Heart right ventricle (tissue), 16 donors: ENCODE measurements at regions of chr12 and their contacts with region 1.

Region 1: DNA sequence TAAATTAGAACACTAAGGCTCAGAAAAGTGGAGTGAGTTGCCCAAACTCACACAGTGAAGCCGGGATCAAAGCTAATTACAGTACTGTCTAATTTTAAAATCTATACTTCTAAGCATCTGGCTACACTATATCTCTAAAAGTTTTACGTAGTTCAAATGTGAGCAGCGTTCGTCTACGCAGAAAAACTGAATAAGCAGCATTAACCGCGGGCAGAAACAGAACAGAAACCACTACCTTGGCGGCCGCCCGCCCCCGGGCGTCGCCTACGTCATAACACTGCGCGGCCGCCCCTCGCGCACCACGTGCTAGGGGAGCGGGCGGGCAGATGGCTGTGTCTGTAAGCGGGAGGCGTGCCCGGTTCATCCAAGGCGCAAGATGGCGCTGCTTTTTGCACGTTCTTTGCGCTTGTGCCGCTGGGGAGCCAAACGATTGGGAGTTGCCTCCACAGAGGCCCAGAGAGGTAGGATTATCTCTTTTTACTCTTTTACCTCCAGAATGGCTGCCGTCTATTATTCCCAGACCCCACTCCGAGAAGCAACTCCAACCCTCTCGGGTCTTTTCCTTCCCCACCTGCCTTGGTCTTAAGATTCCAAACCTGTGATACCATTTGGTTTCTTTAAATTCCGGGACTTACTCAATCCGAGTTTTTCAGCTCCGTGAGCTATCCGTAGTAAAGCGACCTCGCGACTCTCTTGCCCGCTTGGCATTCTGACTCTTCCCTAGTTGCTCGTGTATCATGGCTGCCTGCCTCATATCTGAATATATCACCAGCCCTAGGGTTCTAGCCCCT is at the start of gene SPRYD4:
- DNase-seq: peak; percentile 92 to 93
- ATAC-seq: peak; percentile 96 to 99 (median 98)
- H3K4me3 ChIP-seq: peak within 1 kb of the TSS; percentile 53 to 95 (median 79)
- H3K27ac ChIP-seq: peak within 1 kb of the TSS; percentile 49 to 94 (median 88)
- H3K4me1 ChIP-seq: peaks cover 3 to 35% (median 20%) of the 10 kb centered on the region in 9 donors
- H3K27me3 ChIP-seq: no peaks in the 10 kb centered on the region
- CTCF ChIP-seq: peak in 8 of 9 donors; percentile 13 to 67 (median 44)
- total RNA-seq, gene SPRYD4: 3.0 to 5.0 (median 4.4) TPM

Region 2: GRCh38 chr12:55619354-55620138 is 848.9 kb before region 1 on chr12:
- intact Hi-C with region 1: loop called in 1 of 10 experiments (anchors 10 kb)
- DNase-seq: peak in 1 of 2 donors; percentile 80
- ATAC-seq: peak; percentile 72 to 93 (median 92)
- H3K4me3 ChIP-seq: no peak overlapping the region
- H3K27ac ChIP-seq: no peak overlapping the region
- H3K4me1 ChIP-seq: peaks cover 0 to 10% (median 0%) of the 10 kb centered on the region in 9 donors
- H3K27me3 ChIP-seq: peaks cover 0 to 17% (median 0%) of the 10 kb centered on the region in 7 donors
- CTCF ChIP-seq: peak; percentile 67 to 85 (median 81)

Region 3: GRCh38 chr12:56127888-56128669 is 340.3 kb before region 1 on chr12 and contains the start of gene ESYT1:
- intact Hi-C with region 1: loop called in 3 of 10 experiments (anchors 5 to 10 kb)
- DNase-seq: peak; percentile 95 to 99
- ATAC-seq: peak; percentile 94 to 97 (median 96)
- H3K4me3 ChIP-seq: peak within 1 kb of the TSS; percentile 53 to 94 (median 84)
- H3K27ac ChIP-seq: peak within 1 kb of the TSS; percentile 51 to 94 (median 88)
- H3K4me1 ChIP-seq: peaks cover 8 to 61% (median 44%) of the 10 kb centered on the region in 9 donors
- H3K27me3 ChIP-seq: no peaks in the 10 kb centered on the region
- CTCF ChIP-seq: peak in 1 of 9 donors; percentile 18
- total RNA-seq, gene ESYT1: 28.8 to 47.5 (median 31.9) TPM

Region 4: DNA sequence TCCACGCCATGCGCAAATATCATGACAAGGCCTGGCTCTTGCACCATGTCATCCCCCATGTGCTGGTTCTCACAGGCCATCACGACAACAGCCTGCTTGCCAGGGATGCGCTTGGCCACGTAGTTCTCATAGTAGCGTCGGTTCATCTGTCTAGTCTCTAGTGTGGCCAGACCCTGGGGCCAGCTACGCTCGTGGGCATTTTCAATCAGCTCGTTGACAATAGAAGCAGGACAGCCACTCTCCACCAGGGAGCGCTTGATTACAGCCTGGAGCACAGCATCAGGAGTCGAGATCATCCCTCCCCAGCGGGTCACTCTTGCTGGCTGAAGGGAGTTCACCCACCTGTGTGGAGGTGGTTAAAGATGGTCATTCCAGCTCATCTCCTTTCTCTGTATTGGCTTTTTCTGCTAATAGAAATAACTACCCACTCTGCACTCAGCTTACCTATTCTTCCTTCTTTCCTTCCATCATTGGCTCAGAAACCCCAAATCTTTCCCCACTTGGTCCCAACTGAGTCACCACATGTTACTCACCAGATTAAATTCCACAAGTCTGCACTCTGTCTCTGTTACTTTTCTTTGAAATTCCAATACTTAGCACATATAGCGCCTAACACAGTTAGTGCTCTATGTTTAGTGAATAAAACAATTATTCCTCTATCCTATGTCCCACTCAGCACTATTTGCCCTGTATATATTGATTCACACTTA is 261.8 kb before region 1 on chr12:
- intact Hi-C with region 1: loop called in 2 of 10 experiments (anchors 10 kb)
- DNase-seq: peak; percentile 24 to 55
- ATAC-seq: peak; percentile 36 to 75 (median 64)
- H3K4me3 ChIP-seq: no peak overlapping the region
- H3K27ac ChIP-seq: peak overlapping the region in 2 of 10 donors; percentile 16 to 42
- H3K4me1 ChIP-seq: peaks cover 0 to 22% (median 3%) of the 10 kb centered on the region in 9 donors
- H3K27me3 ChIP-seq: no peaks in the 10 kb centered on the region
- CTCF ChIP-seq: peak in 8 of 9 donors; percentile 24 to 65 (median 57)

Region 5: GRCh38 chr12:56299853-56300643 is 168.4 kb before region 1 on chr12 and contains the start of gene CS:
- intact Hi-C with region 1: no loop called
- DNase-seq: peak; percentile 98 to 99
- ATAC-seq: peak; percentile 97 to 99 (median 98)
- H3K4me3 ChIP-seq: peak within 1 kb of the TSS; percentile 68 to 99 (median 84)
- H3K27ac ChIP-seq: peak within 1 kb of the TSS; percentile 87 to 100 (median 96)
- H3K4me1 ChIP-seq: peaks cover 19 to 72% (median 58%) of the 10 kb centered on the region in 9 donors
- H3K27me3 ChIP-seq: no peaks in the 10 kb centered on the region
- CTCF ChIP-seq: no peak
- total RNA-seq, gene CS: 601 to 991 (median 877) TPM

Region 6: DNA sequence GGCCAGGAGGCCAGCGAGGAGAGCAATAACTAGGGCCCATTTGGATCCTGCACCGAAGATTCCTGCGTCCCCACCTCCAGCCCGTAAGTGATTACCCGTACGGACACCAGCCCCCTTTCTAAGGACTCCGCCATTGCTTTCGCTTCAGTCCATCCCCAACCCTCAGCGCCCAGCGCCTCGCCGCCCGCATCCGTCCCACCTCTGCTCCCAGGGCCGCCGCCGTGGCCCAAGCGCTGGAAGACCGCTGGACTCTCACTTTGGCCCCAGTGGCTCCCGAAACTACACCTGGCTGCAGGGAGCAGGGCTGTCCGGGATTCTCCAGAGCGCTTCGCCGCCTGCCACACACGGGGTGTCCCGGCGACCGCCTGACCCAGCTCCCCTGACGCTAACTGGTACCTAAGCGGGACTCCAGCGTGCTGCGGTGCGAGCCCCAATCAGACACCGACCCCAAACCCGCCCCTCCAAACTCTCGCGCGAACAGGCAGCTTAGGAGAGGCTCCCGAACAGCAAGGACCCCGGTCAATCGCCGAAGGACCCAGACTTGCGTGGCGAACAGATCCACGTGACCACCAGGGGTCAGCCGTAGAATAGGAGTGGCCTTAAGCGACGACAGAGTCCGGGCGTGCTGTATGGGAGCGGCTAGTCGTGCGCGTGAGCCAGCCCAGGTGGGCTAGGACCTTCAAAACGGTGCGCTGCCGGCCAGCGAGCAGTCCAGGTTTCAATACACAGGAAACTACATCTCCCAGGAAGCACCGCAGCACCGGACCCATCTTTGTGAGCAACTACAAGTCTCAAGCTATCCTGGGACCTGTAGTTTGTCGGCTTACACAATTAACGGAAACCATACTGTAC is 152.6 kb before region 1 on chr12 and contains the start of gene CNPY2:
- intact Hi-C with region 1: loop called in 4 of 10 experiments (anchors 10 kb)
- DNase-seq: peak; percentile 94 to 97
- ATAC-seq: peak; percentile 95 to 97 (median 96)
- H3K4me3 ChIP-seq: peak within 1 kb of the TSS; percentile 61 to 99 (median 94)
- H3K27ac ChIP-seq: peak within 1 kb of the TSS; percentile 88 to 98 (median 94)
- H3K4me1 ChIP-seq: peaks cover 7 to 23% (median 16%) of the 10 kb centered on the region in 9 donors
- H3K27me3 ChIP-seq: no peaks in the 10 kb centered on the region
- CTCF ChIP-seq: peak in 5 of 9 donors; percentile 7 to 38 (median 21)
- total RNA-seq, gene CNPY2: 22.3 to 51.0 (median 38.7) TPM

Region 7: GRCh38 chr12:56346703-56347102 is 121.7 kb before region 1 on chr12:
- intact Hi-C with region 1: loop called in 2 of 10 experiments (anchors 10 kb)
- DNase-seq: no peak
- ATAC-seq: peak in 2 of 8 donors; percentile 12 to 19
- H3K4me3 ChIP-seq: no peak overlapping the region
- H3K27ac ChIP-seq: no peak overlapping the region
- H3K4me1 ChIP-seq: no peaks in the 10 kb centered on the region
- H3K27me3 ChIP-seq: no peaks in the 10 kb centered on the region
- CTCF ChIP-seq: peak in 2 of 9 donors; percentile 9 to 12